ENCODE measurements at regions of chr20 and their contacts with region 1.

Region 1: DNA sequence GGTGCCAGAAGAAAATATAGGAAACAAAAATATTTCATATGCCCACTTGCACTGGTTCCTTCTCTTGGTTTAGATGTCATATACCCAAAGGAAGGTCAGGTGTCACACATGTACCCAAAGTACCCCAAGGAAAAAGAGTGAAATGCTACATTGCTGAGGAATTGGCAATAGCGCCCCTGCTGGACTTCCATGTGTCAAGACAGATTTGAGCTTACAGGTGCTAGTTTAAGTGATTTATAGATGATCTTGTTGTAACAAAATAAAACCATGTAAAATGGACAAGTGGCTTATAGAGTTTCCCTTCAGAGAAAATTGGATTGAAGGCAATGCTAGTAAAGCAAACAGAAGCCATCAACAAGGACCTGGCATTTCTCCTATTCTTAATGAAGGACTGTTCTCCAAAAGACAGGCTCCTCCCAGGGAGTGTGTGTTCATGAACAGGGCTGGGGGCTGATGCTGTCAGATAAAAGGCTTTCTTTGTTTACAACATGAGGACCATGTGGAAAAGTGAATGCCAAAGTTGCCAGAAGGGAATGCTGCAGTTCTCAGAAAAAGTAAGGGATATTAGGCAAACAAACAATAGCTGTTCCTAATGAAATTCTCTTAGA is 64.3 kb upstream of the PAK5 start:
- DNase-seq: no peak
- ATAC-seq: peak in 1 of 4 donors; percentile 9
- H3K4me3 ChIP-seq: no peak overlapping the region
- H3K27ac ChIP-seq: no peak overlapping the region
- H3K4me1 ChIP-seq: no peaks in the 10 kb centered on the region
- H3K27me3 ChIP-seq: no peaks in the 10 kb centered on the region
- CTCF ChIP-seq: peak in 1 of 4 donors; percentile 22

Region 2: DNA sequence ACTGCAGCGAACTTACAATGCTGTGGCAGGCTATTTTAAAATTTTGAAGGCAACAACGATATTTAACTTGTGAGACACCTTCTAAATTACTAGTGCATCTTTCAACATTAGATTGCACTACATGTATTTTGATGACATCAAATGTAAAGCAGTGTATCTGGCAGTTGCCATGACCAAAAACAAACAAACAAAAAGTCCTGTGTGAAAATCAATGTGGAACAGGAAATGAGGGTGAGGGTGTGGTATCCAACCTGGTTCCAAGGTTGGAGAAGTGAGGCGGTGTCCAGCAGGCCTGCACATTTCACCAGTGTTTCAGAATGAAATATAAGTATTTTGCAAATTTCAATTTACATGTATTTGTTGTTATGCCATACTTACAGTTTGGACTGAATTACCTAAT is 276.8 kb before region 1 on chr20:
- intact Hi-C with region 1: loop called in 1 of 3 experiments (anchors 10 kb)
- DNase-seq: no peak
- ATAC-seq: peak in 2 of 4 donors; percentile 21 to 67
- H3K4me3 ChIP-seq: no peak overlapping the region
- H3K27ac ChIP-seq: no peak overlapping the region
- H3K4me1 ChIP-seq: no peaks in the 10 kb centered on the region
- H3K27me3 ChIP-seq: no peaks in the 10 kb centered on the region
- CTCF ChIP-seq: no peak

Region 3: GRCh38 chr20:9756660-9757059 is 146.5 kb before region 1 on chr20:
- intact Hi-C with region 1: loop called in 1 of 3 experiments (anchors 2 kb)
- DNase-seq: no peak
- ATAC-seq: peak in 2 of 4 donors; percentile 62 to 64
- H3K4me3 ChIP-seq: no peak overlapping the region
- H3K27ac ChIP-seq: no peak overlapping the region
- H3K4me1 ChIP-seq: no peaks in the 10 kb centered on the region
- H3K27me3 ChIP-seq: no peaks in the 10 kb centered on the region
- CTCF ChIP-seq: no peak